CD4-positive, alpha-beta memory T cell (primary cell): ENCODE measurements at regions of chr3 and their contacts with region 1.

Region 1: GRCh38 chr3:25648107-25648535 is 16.6 kb downstream of the TOP2B start:
- DNase-seq: peak; percentile 75 to 79 (median 78)
- H3K4me3 ChIP-seq: no peak overlapping the region
- H3K4me3 Mint-ChIP-seq: peak overlapping the region in 3 of 8 donors; percentile 0 to 4 (median 3)
- H3K27ac ChIP-seq: no peak overlapping the region
- H3K27ac Mint-ChIP-seq: peak overlapping the region; percentile 0 to 88 (median 45)
- H3K4me1 ChIP-seq: peaks cover 24% of the 10 kb centered on the region
- H3K4me1 Mint-ChIP-seq: peaks cover 26 to 57% (median 45%) of the 10 kb centered on the region in 4 donors
- H3K27me3 ChIP-seq: no peaks in the 10 kb centered on the region
- H3K27me3 Mint-ChIP-seq: no peaks in the 10 kb centered on the region

Region 2: GRCh38 chr3:25633919-25634318 is 14.2 kb before region 1 on chr3:
- CTCF ChIA-PET with region 1: interaction called, 22 read pairs
- POLR2A ChIA-PET with region 1: no interaction called
- intact Hi-C with region 1: no loop called
- DNase-seq: no peak
- H3K4me3 ChIP-seq: no peak overlapping the region
- H3K4me3 Mint-ChIP-seq: no peak overlapping the region
- H3K27ac ChIP-seq: no peak overlapping the region
- H3K27ac Mint-ChIP-seq: peak overlapping the region in 1 of 7 donors; percentile 41
- H3K4me1 ChIP-seq: no peaks in the 10 kb centered on the region
- H3K4me1 Mint-ChIP-seq: peaks cover 4 to 13% (median 11%) of the 10 kb centered on the region in 4 donors
- H3K27me3 ChIP-seq: no peaks in the 10 kb centered on the region
- H3K27me3 Mint-ChIP-seq: no peaks in the 10 kb centered on the region

Region 3: GRCh38 chr3:25725813-25726210 is 77.7 kb after region 1 on chr3:
- CTCF ChIA-PET with region 1: interaction called, 5 read pairs
- POLR2A ChIA-PET with region 1: no interaction called
- intact Hi-C with region 1: loop called (anchors 5 kb)
- DNase-seq: no peak
- H3K4me3 ChIP-seq: no peak overlapping the region
- H3K4me3 Mint-ChIP-seq: no peak overlapping the region
- H3K27ac ChIP-seq: no peak overlapping the region
- H3K27ac Mint-ChIP-seq: peak overlapping the region in 4 of 7 donors; percentile 5 to 67 (median 20)
- H3K4me1 ChIP-seq: no peaks in the 10 kb centered on the region
- H3K4me1 Mint-ChIP-seq: peaks cover 0 to 1% (median under 1%) of the 10 kb centered on the region in 4 donors
- H3K27me3 ChIP-seq: no peaks in the 10 kb centered on the region
- H3K27me3 Mint-ChIP-seq: no peaks in the 10 kb centered on the region

Region 4: DNA sequence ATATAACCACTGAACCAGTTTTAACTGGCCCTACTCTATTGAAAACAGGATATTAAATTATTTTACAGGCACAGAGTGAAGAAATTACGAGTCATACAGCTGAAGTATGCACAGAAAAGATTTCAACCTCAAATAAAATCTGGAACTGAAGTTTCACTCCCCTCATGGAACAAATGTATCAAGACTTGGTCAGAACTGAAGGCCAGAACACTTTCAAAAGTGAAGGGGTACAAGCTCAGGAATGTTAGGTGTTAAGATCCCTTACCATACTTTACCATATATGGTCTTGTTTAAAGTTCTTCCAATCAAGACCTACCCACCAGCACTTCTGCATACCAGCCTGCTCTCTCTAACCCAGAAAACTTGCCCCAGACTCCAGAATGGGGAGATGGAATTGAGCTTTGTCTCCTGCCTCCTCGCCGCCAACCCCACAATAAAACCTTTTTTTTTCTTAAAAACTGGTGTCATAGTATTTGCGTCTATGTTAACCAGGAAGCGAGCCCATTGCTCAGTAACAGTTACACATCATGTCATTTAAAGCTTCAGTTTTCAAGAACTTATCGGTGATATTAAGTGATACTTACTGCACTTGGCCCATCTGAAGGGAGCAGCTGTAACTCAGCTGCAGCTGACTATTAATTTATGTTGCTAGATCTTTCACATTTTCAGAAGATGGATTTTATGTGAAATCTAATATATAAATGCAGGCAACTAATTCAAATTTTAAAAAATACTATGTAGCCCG is 201.7 kb after region 1 on chr3:
- CTCF ChIA-PET with region 1: interaction called, 191 read pairs
- POLR2A ChIA-PET with region 1: interaction called, 4 read pairs
- intact Hi-C with region 1: no loop called
- DNase-seq: no peak
- H3K4me3 ChIP-seq: no peak overlapping the region
- H3K4me3 Mint-ChIP-seq: no peak overlapping the region
- H3K27ac ChIP-seq: no peak overlapping the region
- H3K27ac Mint-ChIP-seq: peak overlapping the region in 1 of 7 donors; percentile 64
- H3K4me1 ChIP-seq: no peaks in the 10 kb centered on the region
- H3K4me1 Mint-ChIP-seq: no peaks in the 10 kb centered on the region
- H3K27me3 ChIP-seq: no peaks in the 10 kb centered on the region
- H3K27me3 Mint-ChIP-seq: peaks cover 0 to 3% of the 10 kb centered on the region in 2 donors

Region 5: DNA sequence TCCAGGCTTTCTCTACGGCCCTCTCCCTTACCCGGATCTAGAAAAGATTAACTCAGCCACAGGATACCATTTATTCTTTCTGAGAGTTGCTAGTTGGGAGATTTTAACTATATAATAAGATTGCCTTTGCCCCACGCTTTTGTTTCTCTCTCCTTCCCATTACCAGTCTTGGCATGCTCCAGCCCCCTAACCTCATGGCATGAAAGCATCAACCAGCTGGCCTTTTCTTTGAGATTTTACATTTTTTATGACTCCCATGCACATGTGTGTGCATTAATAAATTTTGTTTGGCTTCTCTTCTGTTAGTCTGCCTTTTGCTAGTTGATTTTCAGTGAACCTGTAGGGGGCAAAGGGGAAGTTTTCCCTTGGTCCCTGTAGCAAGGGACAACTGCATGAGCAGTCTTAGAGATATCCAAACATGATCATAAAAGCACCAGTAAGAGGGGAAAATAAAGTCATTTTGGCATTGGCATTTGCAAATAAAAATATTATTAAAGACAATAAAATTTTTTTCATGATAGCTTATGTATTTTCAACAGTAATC is 215.4 kb after region 1 on chr3:
- CTCF ChIA-PET with region 1: interaction called, 191 read pairs
- POLR2A ChIA-PET with region 1: no interaction called
- intact Hi-C with region 1: no loop called
- DNase-seq: no peak
- H3K4me3 ChIP-seq: no peak overlapping the region
- H3K4me3 Mint-ChIP-seq: no peak overlapping the region
- H3K27ac ChIP-seq: no peak overlapping the region
- H3K27ac Mint-ChIP-seq: no peak overlapping the region
- H3K4me1 ChIP-seq: no peaks in the 10 kb centered on the region
- H3K4me1 Mint-ChIP-seq: peaks cover 0 to 1% (median 0%) of the 10 kb centered on the region in 4 donors
- H3K27me3 ChIP-seq: no peaks in the 10 kb centered on the region
- H3K27me3 Mint-ChIP-seq: no peaks in the 10 kb centered on the region